Naive thymus-derived CD4-positive, alpha-beta T cell (primary cell): ENCODE measurements at regions of chr21 and their contacts with region 1.

Region 1: GRCh38 chr21:34933609-34934335 is 115.3 kb downstream of the RUNX1 start:
- DNase-seq: peak in 7 of 9 donors; percentile 47 to 83 (median 72)
- ATAC-seq: peak; percentile 94
- H3K4me3 ChIP-seq: peak overlapping the region; percentile 56
- H3K4me3 Mint-ChIP-seq: peak overlapping the region; percentile 39 to 88 (median 78)
- H3K27ac ChIP-seq: peak overlapping the region; percentile 81
- H3K27ac Mint-ChIP-seq: peak overlapping the region; percentile 83 to 97 (median 94)
- H3K4me1 ChIP-seq: peaks cover 52 to 68% of the 10 kb centered on the region in 2 donors
- H3K4me1 Mint-ChIP-seq: peaks cover 70 to 93% (median 89%) of the 10 kb centered on the region in 7 donors
- H3K27me3 ChIP-seq: no peaks in the 10 kb centered on the region
- H3K27me3 Mint-ChIP-seq: no peaks in the 10 kb centered on the region

Region 2: GRCh38 chr21:34592120-34592955 is 341.4 kb before region 1 on chr21:
- CTCF ChIA-PET with region 1: no interaction called
- POLR2A ChIA-PET with region 1: no interaction called
- intact Hi-C with region 1: no loop called
- DNase-seq: no peak
- ATAC-seq: no peak
- H3K4me3 ChIP-seq: no peak overlapping the region
- H3K4me3 Mint-ChIP-seq: no peak overlapping the region
- H3K27ac ChIP-seq: no peak overlapping the region
- H3K27ac Mint-ChIP-seq: no peak overlapping the region
- H3K4me1 ChIP-seq: peaks cover 0 to 4% of the 10 kb centered on the region in 2 donors
- H3K4me1 Mint-ChIP-seq: peaks cover 5 to 24% (median 20%) of the 10 kb centered on the region in 7 donors
- H3K27me3 ChIP-seq: no peaks in the 10 kb centered on the region
- H3K27me3 Mint-ChIP-seq: no peaks in the 10 kb centered on the region

Region 3: DNA sequence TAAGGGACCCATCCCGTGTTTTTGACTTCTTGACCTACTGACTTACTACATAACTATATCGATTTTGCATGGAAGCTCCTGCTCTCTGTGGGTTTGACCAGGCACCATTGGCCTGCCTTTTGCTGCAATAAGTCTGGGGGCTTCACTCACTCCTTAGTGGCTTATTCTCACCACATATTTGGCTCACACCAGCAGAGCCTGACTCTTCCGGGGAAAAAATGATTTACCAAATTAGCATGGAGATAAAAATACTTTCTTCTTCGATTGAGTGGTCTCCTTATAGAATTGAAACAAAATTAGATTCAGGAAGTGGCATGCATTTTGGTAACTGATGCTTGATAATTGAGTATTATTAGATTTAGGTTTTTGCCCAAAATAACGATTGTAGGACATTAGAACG is 14.4 kb before region 1 on chr21:
- CTCF ChIA-PET with region 1: no interaction called
- POLR2A ChIA-PET with region 1: interaction called, 3 read pairs
- intact Hi-C with region 1: loop called in 1 of 2 experiments (anchors 2 kb)
- DNase-seq: no peak
- ATAC-seq: no peak
- H3K4me3 ChIP-seq: no peak overlapping the region
- H3K4me3 Mint-ChIP-seq: no peak overlapping the region
- H3K27ac ChIP-seq: no peak overlapping the region
- H3K27ac Mint-ChIP-seq: peak overlapping the region in 2 of 9 donors; percentile 44 to 59
- H3K4me1 ChIP-seq: peaks cover 0 to 20% of the 10 kb centered on the region in 2 donors
- H3K4me1 Mint-ChIP-seq: peaks cover 18 to 92% (median 83%) of the 10 kb centered on the region in 7 donors
- H3K27me3 ChIP-seq: no peaks in the 10 kb centered on the region
- H3K27me3 Mint-ChIP-seq: no peaks in the 10 kb centered on the region

Region 4: GRCh38 chr21:34946916-34947534 is 13.3 kb after region 1 on chr21:
- CTCF ChIA-PET with region 1: no interaction called
- POLR2A ChIA-PET with region 1: interaction called, 11 read pairs
- intact Hi-C with region 1: loop called (anchors 1 to 2 kb)
- DNase-seq: no peak
- ATAC-seq: peak; percentile 27
- H3K4me3 ChIP-seq: no peak overlapping the region
- H3K4me3 Mint-ChIP-seq: peak overlapping the region in 5 of 10 donors; percentile 35 to 65 (median 49)
- H3K27ac ChIP-seq: no peak overlapping the region
- H3K27ac Mint-ChIP-seq: peak overlapping the region in 6 of 9 donors; percentile 59 to 86 (median 81)
- H3K4me1 ChIP-seq: peaks cover 21 to 50% of the 10 kb centered on the region in 2 donors
- H3K4me1 Mint-ChIP-seq: peaks cover 46 to 100% (median 97%) of the 10 kb centered on the region in 7 donors
- H3K27me3 ChIP-seq: no peaks in the 10 kb centered on the region
- H3K27me3 Mint-ChIP-seq: no peaks in the 10 kb centered on the region

Region 5: DNA sequence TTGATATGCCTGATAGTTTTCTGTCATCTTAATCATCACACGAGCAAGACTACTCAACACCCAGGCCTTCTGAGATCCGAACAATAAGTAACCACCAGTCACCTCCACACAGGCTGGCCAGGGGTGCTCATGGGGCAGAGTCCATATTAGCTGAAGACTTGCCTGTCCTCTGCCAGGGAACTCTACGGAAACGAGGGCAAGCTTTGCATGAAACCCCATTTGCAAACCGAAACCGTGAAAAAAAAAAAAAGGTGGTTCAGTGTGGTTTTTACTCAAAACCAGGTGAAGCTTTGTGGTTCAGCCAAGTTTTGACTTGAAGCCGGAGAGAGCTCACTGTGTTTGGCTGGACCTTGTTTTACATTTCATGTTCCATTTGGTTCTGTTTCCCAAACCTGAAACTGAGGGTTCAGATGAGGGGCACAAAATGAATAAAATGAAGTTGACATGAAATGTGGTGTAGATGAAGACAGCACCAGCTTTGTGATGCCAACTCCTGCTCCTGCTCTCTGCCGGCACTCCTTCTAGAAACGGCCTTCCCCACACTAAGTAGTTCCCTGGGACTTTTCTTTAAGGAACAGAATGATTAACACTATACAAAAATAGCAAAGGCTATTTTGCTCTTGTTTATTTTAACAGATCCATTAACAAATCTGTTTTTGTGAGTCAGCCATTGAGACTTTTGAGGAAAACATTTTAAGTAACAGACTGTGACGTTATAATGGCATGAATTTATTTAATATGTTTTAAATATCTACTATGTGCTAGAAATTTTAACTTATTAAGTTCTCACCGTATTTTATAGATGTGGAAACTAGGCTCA is 40.6 kb after region 1 on chr21:
- CTCF ChIA-PET with region 1: interaction called, 3 read pairs
- POLR2A ChIA-PET with region 1: interaction called, 12 read pairs
- intact Hi-C with region 1: loop called (anchors 2 kb)
- DNase-seq: peak in 8 of 9 donors; percentile 47 to 81 (median 74)
- ATAC-seq: peak; percentile 91
- H3K4me3 ChIP-seq: peak overlapping the region; percentile 36
- H3K4me3 Mint-ChIP-seq: peak overlapping the region; percentile 78 to 92 (median 86)
- H3K27ac ChIP-seq: peak overlapping the region; percentile 70
- H3K27ac Mint-ChIP-seq: peak overlapping the region; percentile 69 to 98 (median 93)
- H3K4me1 ChIP-seq: peaks cover 49 to 61% of the 10 kb centered on the region in 2 donors
- H3K4me1 Mint-ChIP-seq: peaks cover 65 to 94% (median 89%) of the 10 kb centered on the region in 7 donors
- H3K27me3 ChIP-seq: no peaks in the 10 kb centered on the region
- H3K27me3 Mint-ChIP-seq: peaks cover 0 to 45% (median 0%) of the 10 kb centered on the region in 5 donors

Region 6: GRCh38 chr21:35026617-35027562 is 93.1 kb after region 1 on chr21:
- CTCF ChIA-PET with region 1: interaction called, 7 read pairs
- POLR2A ChIA-PET with region 1: interaction called, 12 read pairs
- intact Hi-C with region 1: loop called (anchors 1 kb)
- DNase-seq: peak; percentile 74 to 93 (median 91)
- ATAC-seq: peak; percentile 93
- H3K4me3 ChIP-seq: peak overlapping the region; percentile 45
- H3K4me3 Mint-ChIP-seq: peak overlapping the region; percentile 77 to 98 (median 86)
- H3K27ac ChIP-seq: peak overlapping the region; percentile 75
- H3K27ac Mint-ChIP-seq: peak overlapping the region; percentile 96 to 100 (median 99)
- H3K4me1 ChIP-seq: peaks cover 69 to 85% of the 10 kb centered on the region in 2 donors
- H3K4me1 Mint-ChIP-seq: peaks cover 76 to 98% (median 93%) of the 10 kb centered on the region in 7 donors
- H3K27me3 ChIP-seq: no peaks in the 10 kb centered on the region
- H3K27me3 Mint-ChIP-seq: no peaks in the 10 kb centered on the region

Region 7: DNA sequence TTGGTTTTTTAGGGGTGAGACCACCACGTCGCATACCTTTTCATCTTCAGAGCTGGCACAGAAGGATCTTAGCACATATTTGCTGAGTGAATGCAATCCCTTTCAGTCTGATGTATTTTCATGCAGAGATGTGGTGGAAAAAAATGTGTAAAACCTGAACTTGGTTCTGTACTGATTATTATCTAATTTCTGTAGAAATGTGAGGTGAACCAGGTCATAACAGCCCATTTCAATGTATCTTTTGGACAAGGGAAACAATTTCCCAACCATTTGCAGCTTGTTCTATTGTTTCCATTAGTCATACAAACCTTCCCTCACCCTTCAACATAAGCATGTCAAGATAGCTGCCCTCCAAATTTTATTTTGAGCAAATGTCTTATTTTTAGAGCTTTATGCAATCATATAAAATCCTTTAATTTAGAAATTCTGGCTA is 162.1 kb after region 1 on chr21:
- CTCF ChIA-PET with region 1: no interaction called
- POLR2A ChIA-PET with region 1: no interaction called
- intact Hi-C with region 1: no loop called
- DNase-seq: peak in 1 of 9 donors; percentile 33
- ATAC-seq: no peak
- H3K4me3 ChIP-seq: no peak overlapping the region
- H3K4me3 Mint-ChIP-seq: no peak overlapping the region
- H3K27ac ChIP-seq: no peak overlapping the region
- H3K27ac Mint-ChIP-seq: no peak overlapping the region
- H3K4me1 ChIP-seq: no peaks in the 10 kb centered on the region
- H3K4me1 Mint-ChIP-seq: peaks cover 0 to 7% (median 0%) of the 10 kb centered on the region in 7 donors
- H3K27me3 ChIP-seq: no peaks in the 10 kb centered on the region
- H3K27me3 Mint-ChIP-seq: no peaks in the 10 kb centered on the region